HepG2 (cell line): ENCODE measurements at regions of chr6 and their contacts with region 1.

Region 1: GRCh38 chr6:56708810-56709597 is 66.3 kb upstream of the DST start:
- DNase-seq: peak; percentile 66
- ATAC-seq: peak; percentile 43; the same call in 2 of the 3 replicates
- H3K4me3 ChIP-seq: no peak overlapping the region
- H3K27ac ChIP-seq: no peak overlapping the region
- H3K4me1 ChIP-seq: peaks cover 23% of the 10 kb centered on the region
- H3K27me3 ChIP-seq: no peaks in the 10 kb centered on the region
- CTCF ChIP-seq: peak; percentile 62
- EP300 ChIP-seq: no peak
- POLR2A ChIP-seq: no peak
- RAD21 ChIP-seq: peak; percentile 68; the same call in 1 of the 2 replicates

Region 2: GRCh38 chr6:56671651-56672461 is 37.1 kb before region 1 on chr6:
- CTCF ChIA-PET with region 1: no interaction called
- POLR2A ChIA-PET with region 1: no interaction called
- in situ Hi-C with region 1: no loop called
- intact Hi-C with region 1: no loop called
- DNase-seq: no peak
- ATAC-seq: no peak
- H3K4me3 ChIP-seq: no peak overlapping the region
- H3K27ac ChIP-seq: no peak overlapping the region
- H3K4me1 ChIP-seq: peaks cover 8% of the 10 kb centered on the region; the same call in 1 of the 2 replicates
- H3K27me3 ChIP-seq: no peaks in the 10 kb centered on the region
- CTCF ChIP-seq: no peak
- EP300 ChIP-seq: no peak
- POLR2A ChIP-seq: no peak
- RAD21 ChIP-seq: no peak

Region 3: GRCh38 chr6:56693246-56693607 is 15.8 kb before region 1 on chr6:
- CTCF ChIA-PET with region 1: no interaction called
- POLR2A ChIA-PET with region 1: interaction called, 15 read pairs
- in situ Hi-C with region 1: no loop called
- intact Hi-C with region 1: no loop called
- DNase-seq: peak; percentile 75
- ATAC-seq: peak; percentile 84
- H3K4me3 ChIP-seq: peak overlapping the region; percentile 56 to 64 (median 60)
- H3K27ac ChIP-seq: peak overlapping the region; percentile 68
- H3K4me1 ChIP-seq: peaks cover 55% of the 10 kb centered on the region
- H3K27me3 ChIP-seq: no peaks in the 10 kb centered on the region
- CTCF ChIP-seq: no peak
- EP300 ChIP-seq: no peak
- POLR2A ChIP-seq: peak in 1 of 2 experiments; percentile 67; a peak in 2 of 4 replicates
- RAD21 ChIP-seq: no peak

Region 4: GRCh38 chr6:56742122-56742791 is 33.3 kb after region 1 on chr6:
- CTCF ChIA-PET with region 1: no interaction called
- POLR2A ChIA-PET with region 1: interaction called, 3 read pairs
- in situ Hi-C with region 1: no loop called
- intact Hi-C with region 1: loop called (anchors 5 kb)
- DNase-seq: peak; percentile 25
- ATAC-seq: peak; percentile 70
- H3K4me3 ChIP-seq: peak overlapping the region; percentile 39 to 56 (median 42)
- H3K27ac ChIP-seq: peak overlapping the region; percentile 32
- H3K4me1 ChIP-seq: peaks cover 52% of the 10 kb centered on the region
- H3K27me3 ChIP-seq: no peaks in the 10 kb centered on the region
- CTCF ChIP-seq: no peak
- EP300 ChIP-seq: 0 out of 4 replicates have a peak, but pooled peaks of 1 of the 2 experiments have one; percentile 2
- POLR2A ChIP-seq: peak in 1 of 2 experiments; percentile 39; a peak in 1 of 4 replicates
- RAD21 ChIP-seq: no peak

Region 5: DNA sequence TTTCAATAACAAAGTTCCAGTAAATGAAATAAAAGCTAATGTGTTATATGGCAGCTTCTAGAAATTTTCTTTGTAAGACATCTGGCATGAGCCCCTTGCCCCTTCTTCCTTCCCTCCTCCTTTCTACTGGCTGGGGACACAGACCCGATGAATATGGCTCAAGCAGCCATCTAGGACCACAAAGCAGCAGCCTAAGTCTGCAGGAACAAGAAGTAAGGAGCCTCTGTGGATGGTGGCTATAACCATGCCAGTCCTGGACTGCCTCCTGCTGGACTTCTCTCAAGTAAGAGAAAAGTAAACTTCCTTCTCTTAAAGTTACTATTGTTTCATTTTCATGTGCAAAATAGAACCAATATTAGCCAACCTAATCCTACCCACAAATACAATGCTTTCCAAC is 48.6 kb after region 1 on chr6:
- CTCF ChIA-PET with region 1: interaction called, 73 read pairs
- POLR2A ChIA-PET with region 1: interaction called, 3 read pairs
- in situ Hi-C with region 1: no loop called
- intact Hi-C with region 1: loop called (anchors 1 kb)
- DNase-seq: peak; percentile 72
- ATAC-seq: peak; percentile 97
- H3K4me3 ChIP-seq: no peak overlapping the region
- H3K27ac ChIP-seq: no peak overlapping the region
- H3K4me1 ChIP-seq: no peaks in the 10 kb centered on the region; the same call in 1 of the 2 replicates
- H3K27me3 ChIP-seq: no peaks in the 10 kb centered on the region
- CTCF ChIP-seq: peak; percentile 93
- EP300 ChIP-seq: no peak
- POLR2A ChIP-seq: no peak
- RAD21 ChIP-seq: peak; percentile 91

Region 6: DNA sequence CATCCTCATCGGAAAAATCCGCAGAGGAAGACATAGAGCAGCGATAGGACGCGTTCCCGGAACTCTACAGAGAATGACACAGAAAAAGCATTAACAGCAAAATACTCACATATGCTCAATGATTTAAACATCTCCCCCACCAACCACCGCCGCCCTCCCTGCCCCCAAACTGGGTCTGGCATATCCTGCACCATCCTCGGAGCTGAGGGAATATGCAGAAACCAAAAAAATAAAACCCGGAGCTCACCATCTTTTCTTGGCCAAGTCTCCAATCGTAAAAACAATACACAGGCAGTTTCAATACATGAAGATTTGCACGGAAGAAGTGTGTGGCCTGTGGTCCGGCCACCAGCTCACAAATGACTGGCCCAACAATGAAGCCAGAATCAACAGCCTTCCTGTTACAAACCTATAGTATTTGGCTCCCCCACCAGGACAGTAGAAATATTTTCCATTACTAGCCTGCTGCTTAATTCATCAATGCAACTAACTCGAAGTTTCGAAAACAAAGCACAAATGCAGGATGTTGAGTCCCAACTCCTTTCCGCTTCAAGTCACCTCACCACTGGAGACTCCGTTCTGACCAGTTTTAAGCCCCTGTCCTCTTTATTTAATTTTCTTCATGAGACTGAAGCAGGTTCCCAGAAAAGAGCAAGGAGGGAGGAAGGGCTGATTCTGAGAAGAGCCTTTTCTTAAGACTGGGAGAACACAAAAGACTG is 142.7 kb after region 1 on chr6:
- CTCF ChIA-PET with region 1: interaction called, 5 read pairs
- POLR2A ChIA-PET with region 1: no interaction called
- in situ Hi-C with region 1: loop called (anchors 5 kb)
- intact Hi-C with region 1: loop called (anchors 2 kb)
- DNase-seq: peak; percentile 72
- ATAC-seq: peak; percentile 98
- H3K4me3 ChIP-seq: no peak overlapping the region
- H3K27ac ChIP-seq: no peak overlapping the region
- H3K4me1 ChIP-seq: no peaks in the 10 kb centered on the region
- H3K27me3 ChIP-seq: no peaks in the 10 kb centered on the region
- CTCF ChIP-seq: peak; percentile 82
- EP300 ChIP-seq: no peak
- POLR2A ChIP-seq: no peak
- RAD21 ChIP-seq: peak; percentile 66